ENCODE measurements at regions of chr15 and their contacts with region 1.

Region 1: GRCh38 chr15:48861813-48862431 is 16.0 kb upstream of the EID1 start:
- DNase-seq: no peak
- H3K4me3 ChIP-seq: no peak overlapping the region
- H3K27ac ChIP-seq: no peak overlapping the region
- H3K4me1 ChIP-seq: no peaks in the 10 kb centered on the region
- H3K27me3 ChIP-seq: no peaks in the 10 kb centered on the region
- CTCF ChIP-seq: peak; percentile 49 to 86 (median 81)
- POLR2A ChIP-seq: no peak

Region 2: GRCh38 chr15:49042165-49042564 is 180.2 kb after region 1 on chr15:
- intact Hi-C with region 1: loop called (anchors 2 kb)
- DNase-seq: no peak
- H3K4me3 ChIP-seq: no peak overlapping the region
- H3K27ac ChIP-seq: no peak overlapping the region
- H3K4me1 ChIP-seq: peaks cover 0 to 4% of the 10 kb centered on the region in 2 donors
- H3K27me3 ChIP-seq: no peaks in the 10 kb centered on the region
- CTCF ChIP-seq: no peak
- POLR2A ChIP-seq: no peak

Region 3: DNA sequence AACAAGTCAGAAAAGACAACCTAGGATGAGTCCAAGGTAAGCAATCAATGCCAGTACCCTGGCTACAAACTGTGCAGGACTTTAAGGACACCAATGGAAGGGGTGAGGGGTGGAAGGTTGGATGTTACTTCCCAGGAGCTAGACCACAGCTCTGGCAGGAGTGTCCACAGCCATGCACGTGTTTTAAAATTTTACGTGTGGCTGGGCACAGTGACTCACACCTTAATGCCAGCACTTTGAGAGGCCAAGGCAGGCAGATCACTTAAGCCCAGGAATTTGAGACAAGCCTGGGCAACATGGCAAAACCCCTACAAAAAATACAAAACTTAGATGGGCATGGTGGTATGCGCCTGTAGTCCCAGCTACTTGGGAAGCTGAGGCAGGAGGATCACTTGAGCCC is 1418.3 kb after region 1 on chr15:
- intact Hi-C with region 1: no loop called
- DNase-seq: no peak
- H3K4me3 ChIP-seq: no peak overlapping the region
- H3K27ac ChIP-seq: no peak overlapping the region
- H3K4me1 ChIP-seq: no peaks in the 10 kb centered on the region
- H3K27me3 ChIP-seq: no peaks in the 10 kb centered on the region
- CTCF ChIP-seq: no peak
- POLR2A ChIP-seq: no peak